IMR-90 (cell line): ENCODE measurements at regions of chr5 and their contacts with region 1.

Region 1: DNA sequence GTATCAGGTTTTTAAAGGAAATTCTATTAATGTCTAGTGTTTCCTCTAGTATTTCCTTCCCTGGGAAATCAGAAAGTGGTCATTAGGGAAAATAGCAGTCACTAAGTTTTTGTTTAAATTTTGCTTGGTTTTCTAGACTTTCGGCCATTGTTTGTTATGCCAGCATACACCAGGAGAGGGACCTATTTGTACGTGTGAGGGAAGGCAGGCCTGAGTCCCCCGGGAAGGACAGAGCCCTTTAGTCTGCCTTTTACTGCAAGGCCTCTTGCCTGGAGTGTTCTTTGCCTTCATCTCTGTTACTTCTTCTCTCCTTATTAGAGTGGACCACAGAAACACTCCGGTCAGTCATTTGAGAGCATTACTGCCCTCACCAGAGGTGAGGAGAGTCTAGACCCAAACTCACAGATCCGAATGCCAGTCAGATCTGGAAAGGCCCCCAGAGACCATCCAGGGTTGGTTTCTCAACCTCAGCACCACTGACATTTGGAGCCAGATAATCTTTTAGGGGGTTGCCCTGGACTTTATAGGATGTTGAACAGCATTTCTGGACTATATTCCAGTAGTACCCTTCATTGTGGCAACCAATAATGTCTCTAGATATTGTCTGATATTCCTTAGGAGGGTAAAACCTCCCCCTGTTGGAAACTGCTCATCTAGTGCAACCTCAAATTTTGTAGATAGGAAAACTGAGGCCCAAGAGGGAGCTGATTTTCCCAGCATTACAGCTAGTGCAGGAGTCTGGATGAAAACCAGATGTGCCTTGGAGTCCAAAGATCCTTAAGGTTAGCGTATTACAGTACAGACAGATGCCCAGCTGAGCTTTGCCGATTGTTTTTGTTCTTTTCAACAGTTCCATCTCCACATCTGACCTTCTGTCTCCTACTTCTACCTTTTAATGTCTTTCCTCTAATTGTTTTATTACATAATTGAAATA is 93.0 kb upstream of the NIPAL4 start:
- DNase-seq: peak; percentile 84
- ATAC-seq: peak; percentile 78
- H3K4me3 ChIP-seq: no peak overlapping the region
- H3K27ac ChIP-seq: no peak overlapping the region
- H3K4me1 ChIP-seq: peaks cover 5% of the 10 kb centered on the region
- H3K27me3 ChIP-seq: no peaks in the 10 kb centered on the region
- CTCF ChIP-seq: peak; percentile 92
- POLR2A ChIP-seq: no peak
- RAD21 ChIP-seq: peak; percentile 96

Region 2: DNA sequence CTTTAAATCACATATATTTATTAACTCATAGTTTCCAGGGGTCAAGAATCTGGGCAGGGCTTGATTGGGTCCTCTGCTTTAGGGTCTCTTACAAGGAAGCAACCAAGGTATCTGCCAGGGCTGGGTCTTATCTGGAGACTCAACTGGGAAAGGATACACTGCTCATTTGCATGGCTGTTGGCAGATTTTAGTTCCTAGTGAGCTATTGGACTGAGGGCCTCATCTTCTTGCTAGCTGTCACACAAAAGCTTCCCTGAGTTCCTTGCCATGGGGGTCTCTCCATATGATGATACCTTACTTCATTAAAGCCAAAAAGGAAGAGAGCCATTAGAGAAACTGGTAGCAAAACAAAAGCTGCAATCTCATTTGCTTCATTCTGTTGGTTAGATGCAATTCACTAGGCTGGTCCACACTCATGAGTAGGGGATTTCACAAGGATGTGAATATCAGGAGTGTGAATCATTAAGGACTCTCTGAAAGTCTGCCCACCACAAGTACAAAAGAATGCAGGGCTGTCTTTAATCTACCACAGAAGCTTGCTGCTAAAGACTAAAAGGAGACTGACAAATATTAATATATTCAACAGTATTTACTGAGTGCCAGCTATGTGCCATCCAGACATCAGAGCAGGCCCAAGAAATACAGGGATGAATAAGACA is 362.0 kb before region 1 on chr5:
- CTCF ChIA-PET with region 1: no interaction called
- POLR2A ChIA-PET with region 1: no interaction called
- dilution Hi-C with region 1: no loop called
- in situ Hi-C with region 1: no loop called
- intact Hi-C with region 1: no loop called
- DNase-seq: no peak
- ATAC-seq: no peak
- H3K4me3 ChIP-seq: no peak overlapping the region
- H3K27ac ChIP-seq: no peak overlapping the region
- H3K4me1 ChIP-seq: no peaks in the 10 kb centered on the region
- H3K27me3 ChIP-seq: no peaks in the 10 kb centered on the region
- CTCF ChIP-seq: no peak
- POLR2A ChIP-seq: no peak
- RAD21 ChIP-seq: no peak

Region 3: GRCh38 chr5:157384971-157385709 is 18.1 kb after region 1 on chr5:
- CTCF ChIA-PET with region 1: interaction called, 3 read pairs
- POLR2A ChIA-PET with region 1: interaction called, 4 read pairs
- dilution Hi-C with region 1: no loop called
- in situ Hi-C with region 1: no loop called
- intact Hi-C with region 1: loop called (anchors 1 kb)
- DNase-seq: peak; percentile 99
- ATAC-seq: peak; percentile 86
- H3K4me3 ChIP-seq: no peak overlapping the region
- H3K27ac ChIP-seq: peak overlapping the region; percentile 64
- H3K4me1 ChIP-seq: peaks cover 23% of the 10 kb centered on the region
- H3K27me3 ChIP-seq: no peaks in the 10 kb centered on the region
- CTCF ChIP-seq: no peak
- POLR2A ChIP-seq: no peak
- RAD21 ChIP-seq: no peak

Region 4: GRCh38 chr5:157476702-157477408 is 109.8 kb after region 1 on chr5:
- CTCF ChIA-PET with region 1: interaction called, 6 read pairs
- POLR2A ChIA-PET with region 1: no interaction called
- dilution Hi-C with region 1: no loop called
- in situ Hi-C with region 1: loop called (anchors 5 kb)
- intact Hi-C with region 1: loop called (anchors 1 kb)
- DNase-seq: peak; percentile 74
- ATAC-seq: peak; percentile 76
- H3K4me3 ChIP-seq: no peak overlapping the region
- H3K27ac ChIP-seq: no peak overlapping the region
- H3K4me1 ChIP-seq: peaks cover 9% of the 10 kb centered on the region; the same call in 1 of the 2 replicates
- H3K27me3 ChIP-seq: no peaks in the 10 kb centered on the region
- CTCF ChIP-seq: peak; percentile 88
- POLR2A ChIP-seq: 0 out of 2 replicates have a peak, but pooled peaks have one; percentile 34
- RAD21 ChIP-seq: peak; percentile 87

Region 5: GRCh38 chr5:157718519-157718918 is 351.5 kb after region 1 on chr5:
- CTCF ChIA-PET with region 1: interaction called, 3 read pairs
- POLR2A ChIA-PET with region 1: no interaction called
- dilution Hi-C with region 1: no loop called
- in situ Hi-C with region 1: no loop called
- intact Hi-C with region 1: loop called (anchors 1 kb)
- DNase-seq: peak; percentile 77
- ATAC-seq: peak; percentile 99
- H3K4me3 ChIP-seq: no peak overlapping the region
- H3K27ac ChIP-seq: no peak overlapping the region
- H3K4me1 ChIP-seq: peaks cover 2% of the 10 kb centered on the region; the same call in 1 of the 2 replicates
- H3K27me3 ChIP-seq: no peaks in the 10 kb centered on the region
- CTCF ChIP-seq: peak; percentile 83
- POLR2A ChIP-seq: peak; percentile 24; the same call in 1 of the 2 replicates
- RAD21 ChIP-seq: peak; percentile 91